ENCODE measurements at regions of chr12 and their contacts with region 1.

Region 1: DNA sequence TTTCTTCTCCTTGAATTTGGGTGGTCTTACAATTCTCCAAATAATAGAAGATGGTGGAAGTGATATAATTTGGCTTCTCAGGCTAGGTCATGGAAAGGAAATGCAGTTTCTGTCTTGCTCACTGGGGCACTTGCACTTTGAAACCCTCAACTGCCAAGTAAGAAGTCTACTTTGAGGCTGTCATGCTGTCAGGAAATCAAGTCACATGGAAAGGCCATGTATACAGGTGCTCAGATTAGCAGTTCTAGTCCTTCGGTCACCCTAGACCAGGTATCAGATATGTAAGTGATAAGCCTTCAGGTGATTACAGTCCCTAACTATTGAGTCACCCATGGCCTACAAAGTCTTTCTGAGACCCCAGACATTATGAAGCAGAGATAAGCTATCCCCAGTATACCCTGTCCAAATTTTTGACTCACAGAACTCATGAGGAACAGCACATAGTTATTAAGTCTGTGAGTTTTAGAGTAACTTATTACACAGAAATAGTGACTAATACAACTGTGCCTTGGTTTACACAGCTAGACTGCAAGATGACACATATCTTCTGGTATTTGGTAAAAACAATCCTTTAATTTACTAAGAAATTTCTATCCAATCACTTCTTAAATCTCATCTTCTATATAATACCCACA is 26.3 kb upstream of the BBS10 start:
- DNase-seq: no peak
- ATAC-seq: peak; percentile 80
- H3K4me3 Mint-ChIP-seq: no peak overlapping the region
- H3K27ac Mint-ChIP-seq: no peak overlapping the region
- H3K4me1 Mint-ChIP-seq: peaks cover 7% of the 10 kb centered on the region
- H3K27me3 Mint-ChIP-seq: no peaks in the 10 kb centered on the region

Region 2: GRCh38 chr12:76186131-76186916 is 188.2 kb before region 1 on chr12:
- CTCF ChIA-PET with region 1: no interaction called
- POLR2A ChIA-PET with region 1: no interaction called
- intact Hi-C with region 1: no loop called
- DNase-seq: no peak
- ATAC-seq: no peak
- H3K4me3 Mint-ChIP-seq: no peak overlapping the region
- H3K27ac Mint-ChIP-seq: no peak overlapping the region
- H3K4me1 Mint-ChIP-seq: peaks cover 12% of the 10 kb centered on the region
- H3K27me3 Mint-ChIP-seq: peaks cover 37% of the 10 kb centered on the region

Region 3: DNA sequence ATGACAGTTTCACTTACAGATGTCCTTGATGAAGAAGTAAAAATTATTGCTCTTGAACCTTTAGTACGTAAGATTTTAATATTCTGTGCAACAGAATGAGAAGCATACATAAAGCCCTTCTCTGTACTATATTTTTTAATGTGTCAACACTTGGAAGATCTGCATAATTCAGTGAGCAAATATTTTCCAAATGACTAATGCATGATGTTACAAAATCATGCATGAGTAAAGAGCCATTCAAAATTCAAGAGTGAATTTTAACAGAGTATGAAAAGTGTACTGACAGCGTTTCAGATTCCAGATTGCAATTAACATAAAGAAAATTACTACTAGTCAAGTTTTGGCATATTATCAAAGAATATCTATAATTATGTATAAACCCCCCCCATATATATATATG is 75.1 kb after region 1 on chr12:
- CTCF ChIA-PET with region 1: no interaction called
- POLR2A ChIA-PET with region 1: no interaction called
- intact Hi-C with region 1: loop called in 1 of 2 experiments (anchors 5 kb)
- DNase-seq: no peak
- ATAC-seq: no peak
- H3K4me3 Mint-ChIP-seq: no peak overlapping the region
- H3K27ac Mint-ChIP-seq: no peak overlapping the region
- H3K4me1 Mint-ChIP-seq: peaks cover 38% of the 10 kb centered on the region
- H3K27me3 Mint-ChIP-seq: no peaks in the 10 kb centered on the region